ENCODE measurements at regions of chr16 and their contacts with region 1.

Region 1: GRCh38 chr16:28974437-28975157 is at the start of gene SPNS1:
- DNase-seq: peak; percentile 84 to 99
- H3K4me3 ChIP-seq: peak within 1 kb of the TSS; percentile 90 to 93
- H3K27ac ChIP-seq: peak within 1 kb of the TSS; percentile 77 to 80
- H3K4me1 ChIP-seq: peaks cover 5 to 20% of the 10 kb centered on the region in 2 donors
- H3K27me3 ChIP-seq: no peaks in the 10 kb centered on the region
- CTCF ChIP-seq: no peak
- total RNA-seq, gene SPNS1: 59.3 TPM

Region 2: GRCh38 chr16:28553776-28554633 is 420.6 kb before region 1 on chr16 and contains the start of gene SGF29:
- intact Hi-C with region 1: loop called (anchors 10 kb)
- DNase-seq: peak; percentile 53 to 95
- H3K4me3 ChIP-seq: peak within 1 kb of the TSS; percentile 61 to 62
- H3K27ac ChIP-seq: peak within 1 kb of the TSS; percentile 87 to 96
- H3K4me1 ChIP-seq: peaks cover 0 to 7% of the 10 kb centered on the region in 2 donors
- H3K27me3 ChIP-seq: no peaks in the 10 kb centered on the region
- CTCF ChIP-seq: peak in 2 of 3 experiments; percentile 32 to 35
- total RNA-seq, gene SGF29: 14.0 TPM

Region 3: DNA sequence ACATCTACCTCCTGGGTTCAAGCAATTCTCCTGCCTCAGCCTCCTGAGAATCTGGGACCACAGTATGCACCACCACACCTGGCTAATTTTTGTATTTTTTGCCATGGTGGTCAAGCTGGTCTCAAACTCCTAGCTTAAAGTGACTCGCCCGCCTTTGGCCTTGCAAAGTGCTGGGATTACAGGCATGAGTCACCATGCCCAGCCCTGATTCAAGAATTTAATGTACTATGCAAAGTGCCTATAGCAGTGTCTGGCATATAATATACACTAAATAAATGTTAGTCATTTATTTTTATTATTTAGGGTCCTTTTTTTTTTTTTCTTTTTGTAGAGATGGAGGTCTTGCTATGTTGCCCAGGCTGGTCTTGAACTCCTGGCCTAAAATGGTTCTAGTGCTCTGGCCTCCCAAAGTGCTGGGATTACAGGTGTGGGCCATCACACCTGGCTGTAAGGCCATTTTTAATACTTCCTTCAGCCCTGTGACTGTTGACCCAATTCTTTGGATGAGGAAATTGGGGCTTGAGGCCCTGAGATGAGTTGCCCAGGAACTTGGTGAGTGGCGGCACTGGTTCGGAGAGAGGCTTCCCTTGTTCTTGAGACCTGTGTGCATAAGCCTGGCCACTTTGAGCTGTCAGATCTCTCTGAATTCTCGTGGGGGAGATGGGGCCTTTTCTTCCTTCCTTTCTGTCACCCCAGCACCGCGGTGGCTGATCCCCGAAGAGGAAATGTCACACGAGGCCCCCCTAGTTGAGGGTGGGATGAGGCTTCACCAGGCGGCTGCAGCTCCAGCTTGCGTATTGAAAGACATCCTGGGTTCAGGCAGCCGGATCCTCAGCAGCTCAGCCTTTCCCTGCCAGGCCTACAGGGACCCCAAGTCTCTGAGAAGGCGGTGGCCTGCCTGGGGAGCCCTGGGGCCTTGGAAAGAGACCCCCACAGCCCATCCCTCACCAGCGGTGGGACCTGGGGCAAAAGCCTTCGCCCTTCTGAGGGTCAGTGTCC is 49.0 kb after region 1 on chr16:
- intact Hi-C with region 1: no loop called
- DNase-seq: no peak
- H3K4me3 ChIP-seq: no peak overlapping the region
- H3K27ac ChIP-seq: no peak overlapping the region
- H3K4me1 ChIP-seq: no peaks in the 10 kb centered on the region
- H3K27me3 ChIP-seq: no peaks in the 10 kb centered on the region
- CTCF ChIP-seq: no peak

Region 4: DNA sequence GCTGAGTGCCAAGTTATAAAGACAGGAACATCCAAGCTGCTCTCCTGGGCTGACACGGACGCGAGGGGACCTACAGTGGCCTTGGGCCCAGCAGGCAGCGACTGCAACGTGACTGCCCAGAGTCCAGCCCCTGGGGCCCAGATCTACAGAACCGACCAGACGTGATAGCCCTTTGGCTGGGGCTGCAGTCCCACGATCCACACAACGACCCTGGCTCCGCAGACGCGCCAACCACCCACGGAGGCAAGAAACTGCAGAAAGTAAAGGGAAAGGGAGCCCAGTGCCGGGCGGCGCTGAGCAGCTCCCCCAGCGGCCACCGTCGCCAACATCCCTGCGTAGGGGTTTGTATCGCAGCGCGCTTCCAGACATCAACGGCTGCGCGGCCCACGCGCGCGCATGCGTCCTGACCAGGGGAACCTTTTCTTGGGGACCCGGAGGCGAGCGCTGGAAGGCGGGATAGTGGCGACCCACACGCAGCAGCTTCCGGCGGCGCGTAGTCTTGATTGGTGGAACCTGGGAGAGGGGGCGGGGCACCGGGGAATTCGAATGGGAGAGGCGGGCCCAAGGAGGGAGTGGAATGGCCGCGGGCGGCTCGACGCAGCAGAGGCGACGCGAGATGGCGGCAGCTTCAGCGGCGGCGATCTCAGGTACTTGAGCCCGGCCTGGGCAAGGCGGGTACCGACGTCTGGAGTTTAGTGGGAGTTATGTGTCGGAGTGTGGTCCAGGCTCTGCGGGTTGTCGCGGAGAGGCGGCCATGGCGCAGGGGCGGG is 815.8 kb after region 1 on chr16 and contains the start of gene KIF22:
- intact Hi-C with region 1: loop called (anchors 5 kb)
- DNase-seq: peak; percentile 94 to 100
- H3K4me3 ChIP-seq: peak within 1 kb of the TSS; percentile 58 to 89
- H3K27ac ChIP-seq: peak within 1 kb of the TSS; percentile 76 to 87
- H3K4me1 ChIP-seq: peaks cover 0 to 17% of the 10 kb centered on the region in 2 donors
- H3K27me3 ChIP-seq: no peaks in the 10 kb centered on the region
- CTCF ChIP-seq: peak; percentile 66 to 84 (median 75)
- total RNA-seq, gene KIF22: 28.6 TPM